Panc1 (cell line): ENCODE measurements at regions of chr6 and their contacts with region 1.

Region 1: GRCh38 chr6:130760006-130760405 is 67.2 kb upstream of the SMLR1 start:
- DNase-seq: no peak
- ATAC-seq: peak; percentile 87
- H3K4me3 ChIP-seq: no peak overlapping the region
- H3K27ac ChIP-seq: no peak overlapping the region
- H3K4me1 ChIP-seq: no peaks in the 10 kb centered on the region
- H3K27me3 ChIP-seq: no peaks in the 10 kb centered on the region
- CTCF ChIP-seq: peak; percentile 76

Region 2: GRCh38 chr6:130037207-130037811 is 722.7 kb before region 1 on chr6:
- CTCF ChIA-PET with region 1: no interaction called
- POLR2A ChIA-PET with region 1: no interaction called
- in situ Hi-C with region 1: no loop called
- intact Hi-C with region 1: loop called (anchors 5 kb)
- DNase-seq: no peak
- ATAC-seq: no peak
- H3K4me3 ChIP-seq: no peak overlapping the region
- H3K27ac ChIP-seq: no peak overlapping the region
- H3K4me1 ChIP-seq: no peaks in the 10 kb centered on the region
- H3K27me3 ChIP-seq: no peaks in the 10 kb centered on the region
- CTCF ChIP-seq: peak; percentile 61; the same call in 1 of the 2 replicates